ENCODE measurements at regions of chr6 and their contacts with region 1.

Region 1: DNA sequence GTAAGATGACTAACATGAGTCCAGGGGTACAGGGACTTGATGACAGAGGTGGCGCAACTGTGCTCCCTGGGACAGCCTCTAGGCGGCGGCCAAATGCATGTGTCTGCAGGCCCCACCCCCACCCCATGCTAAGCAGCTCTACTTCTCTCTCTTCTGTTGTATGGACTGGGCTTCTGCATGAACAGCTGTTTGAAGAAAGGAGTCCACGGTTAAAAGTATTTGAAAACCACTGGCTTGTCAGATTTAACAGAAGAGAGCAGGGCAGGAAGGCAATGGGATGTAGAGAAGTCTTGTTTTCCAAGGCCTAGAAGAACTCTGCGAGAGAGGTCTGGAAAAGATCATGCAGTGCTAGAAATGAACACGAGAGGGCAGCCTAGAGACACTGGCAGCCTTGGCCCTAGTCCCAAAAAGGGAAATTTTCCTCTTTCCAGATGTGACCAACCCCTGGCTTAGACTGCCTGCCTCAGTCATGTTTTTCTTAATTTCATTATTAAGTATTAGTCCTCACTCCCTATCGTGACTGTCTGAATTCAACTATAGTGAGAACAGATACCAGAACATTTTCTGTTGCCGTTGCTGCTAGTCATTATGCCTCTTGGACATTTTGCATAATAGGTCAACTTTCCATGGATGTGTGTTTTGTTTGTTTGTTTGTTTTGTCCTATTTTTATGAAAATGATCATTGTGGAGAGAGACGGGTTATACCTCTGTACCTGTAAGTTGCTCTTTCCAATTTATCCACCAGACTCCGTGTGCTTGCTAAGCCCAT is 265.0 kb downstream of the ADGRG6 start:
- DNase-seq: peak; percentile 63
- H3K4me3 Mint-ChIP-seq: no peak overlapping the region
- H3K27ac Mint-ChIP-seq: no peak overlapping the region
- H3K4me1 Mint-ChIP-seq: peaks cover 49% of the 10 kb centered on the region
- H3K27me3 Mint-ChIP-seq: no peaks in the 10 kb centered on the region

Region 2: GRCh38 chr6:142545147-142545546 is 21.7 kb before region 1 on chr6:
- CTCF ChIA-PET with region 1: interaction called, 16 read pairs
- POLR2A ChIA-PET with region 1: interaction called, 3 read pairs
- intact Hi-C with region 1: loop called (anchors 2 kb)
- DNase-seq: peak; percentile 15
- H3K4me3 Mint-ChIP-seq: no peak overlapping the region
- H3K27ac Mint-ChIP-seq: no peak overlapping the region
- H3K4me1 Mint-ChIP-seq: peaks cover 23% of the 10 kb centered on the region
- H3K27me3 Mint-ChIP-seq: peaks cover 2% of the 10 kb centered on the region

Region 3: DNA sequence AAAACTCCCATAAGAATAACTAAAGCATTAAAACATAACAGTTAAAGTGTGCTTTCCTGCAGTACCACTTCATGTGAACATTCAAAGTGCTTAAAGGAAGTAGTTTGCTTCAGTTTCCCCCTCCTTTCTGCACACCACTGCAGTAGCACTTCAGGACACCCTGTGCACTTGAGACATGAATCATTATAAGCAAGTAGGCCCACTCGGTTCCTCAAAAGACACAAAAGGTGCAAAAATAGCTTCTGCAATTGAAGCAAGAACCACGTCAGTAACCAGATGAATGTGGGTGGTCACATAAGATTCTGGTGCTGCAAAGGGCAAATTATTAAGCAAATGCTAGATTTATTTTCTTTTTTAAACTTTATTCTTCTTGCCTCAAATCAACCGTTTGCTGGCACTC is 217.5 kb after region 1 on chr6:
- CTCF ChIA-PET with region 1: no interaction called
- POLR2A ChIA-PET with region 1: no interaction called
- intact Hi-C with region 1: loop called (anchors 5 kb)
- DNase-seq: no peak
- H3K4me3 Mint-ChIP-seq: no peak overlapping the region
- H3K27ac Mint-ChIP-seq: peak overlapping the region; percentile 36
- H3K4me1 Mint-ChIP-seq: peaks cover 67% of the 10 kb centered on the region
- H3K27me3 Mint-ChIP-seq: no peaks in the 10 kb centered on the region

Region 4: GRCh38 chr6:143026696-143027449 is 460.1 kb after region 1 on chr6:
- CTCF ChIA-PET with region 1: interaction called, 7 read pairs
- POLR2A ChIA-PET with region 1: no interaction called
- intact Hi-C with region 1: loop called (anchors 1 kb)
- DNase-seq: peak; percentile 73
- H3K4me3 Mint-ChIP-seq: no peak overlapping the region
- H3K27ac Mint-ChIP-seq: no peak overlapping the region
- H3K4me1 Mint-ChIP-seq: peaks cover 6% of the 10 kb centered on the region
- H3K27me3 Mint-ChIP-seq: no peaks in the 10 kb centered on the region